ENCODE measurements at regions of chr16 and their contacts with region 1.

Region 1: GRCh38 chr16:24689145-24689544 is 40.3 kb upstream of the TNRC6A start:
- ATAC-seq: peak in 4 of 8 experiments; percentile 14 to 79 (median 76)
- H3K4me3 ChIP-seq: no peak overlapping the region
- H3K27ac ChIP-seq: no peak overlapping the region
- H3K4me1 ChIP-seq: peaks cover 10% of the 10 kb centered on the region in 2 donors

Region 2: GRCh38 chr16:24580665-24581064 is 108.5 kb before region 1 on chr16:
- in situ Hi-C with region 1: loop called in 1 of 9 experiments (anchors 25 kb)
- ATAC-seq: peak in 1 of 8 experiments; percentile 44
- H3K4me3 ChIP-seq: no peak overlapping the region
- H3K27ac ChIP-seq: no peak overlapping the region
- H3K4me1 ChIP-seq: no peaks in the 10 kb centered on the region

Measured in motor neuron (in vitro differentiated cells).